ENCODE measurements at regions of chr14 and their contacts with region 1.

Region 1: GRCh38 chr14:102694530-102695166 is 82.6 kb upstream of the TRAF3 start:
- DNase-seq: no peak
- H3K4me3 ChIP-seq: no peak overlapping the region
- CTCF ChIP-seq: peak; percentile 50

Region 2: DNA sequence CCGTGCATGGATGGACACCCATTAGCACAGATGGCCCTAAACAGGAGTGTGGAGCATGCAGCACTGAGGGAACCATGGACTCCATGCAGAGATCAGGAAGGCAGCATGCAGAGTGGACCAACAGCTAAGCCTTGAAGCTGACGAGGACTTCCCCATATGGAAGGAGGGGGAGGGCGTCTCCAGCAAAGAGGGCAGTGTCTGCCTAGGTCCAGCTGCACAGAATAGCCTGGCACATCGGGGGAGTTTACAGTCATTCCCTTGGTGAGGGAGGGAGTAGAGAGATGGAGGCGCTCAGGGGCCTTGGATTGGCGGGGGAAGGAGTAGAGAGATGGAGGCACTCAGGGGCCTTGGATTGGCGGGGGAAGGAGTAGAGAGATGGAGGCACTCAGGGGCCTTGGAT is 249.6 kb before region 1 on chr14:
- CTCF ChIA-PET with region 1: no interaction called
- POLR2A ChIA-PET with region 1: no interaction called
- DNase-seq: no peak
- H3K4me3 ChIP-seq: no peak overlapping the region
- CTCF ChIP-seq: no peak

Region 3: DNA sequence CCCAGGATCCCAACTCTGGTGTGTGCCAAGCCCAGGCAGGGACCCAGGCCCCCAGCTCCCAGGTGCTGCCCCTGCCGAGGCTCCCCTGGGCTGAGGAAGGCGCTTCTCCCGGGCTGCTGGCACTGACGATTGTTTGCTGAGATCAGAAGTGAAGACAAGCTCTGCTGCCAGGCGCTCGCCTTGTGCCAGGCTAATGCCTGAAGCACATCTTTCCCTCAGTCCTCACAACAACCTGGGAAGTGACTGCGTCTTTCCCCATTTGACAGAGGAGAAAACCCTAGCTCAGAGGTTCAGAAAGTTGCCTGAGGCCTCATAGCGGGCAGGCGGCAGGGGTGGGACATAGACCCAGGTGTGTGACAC is 221.9 kb before region 1 on chr14:
- CTCF ChIA-PET with region 1: no interaction called
- POLR2A ChIA-PET with region 1: no interaction called
- DNase-seq: no peak
- H3K4me3 ChIP-seq: no peak overlapping the region
- CTCF ChIP-seq: no peak

Region 4: DNA sequence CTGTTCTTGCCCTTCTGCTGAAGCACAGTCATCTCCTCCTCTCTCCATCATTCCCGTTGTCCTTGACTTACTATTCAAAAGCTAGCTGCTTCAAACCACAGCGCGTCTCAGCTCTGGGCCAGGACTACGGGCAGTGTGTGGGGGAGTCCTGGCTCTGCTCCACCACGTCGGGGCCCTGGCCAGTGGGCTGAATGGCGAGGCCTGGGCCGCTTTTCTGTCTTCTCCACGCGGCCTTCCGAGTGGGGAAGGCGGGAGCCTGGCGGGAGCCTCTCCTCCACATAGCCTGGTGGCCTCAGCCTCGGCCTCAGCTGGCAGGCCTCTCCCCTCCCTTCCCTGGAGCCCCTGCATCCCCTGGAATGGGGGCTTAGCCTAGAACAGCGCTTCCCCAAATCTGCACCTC is 201.6 kb before region 1 on chr14:
- CTCF ChIA-PET with region 1: no interaction called
- POLR2A ChIA-PET with region 1: no interaction called
- DNase-seq: no peak
- H3K4me3 ChIP-seq: no peak overlapping the region
- CTCF ChIP-seq: no peak

Region 5: GRCh38 chr14:102591889-102592763 is 102.5 kb before region 1 on chr14 and contains the start of gene RCOR1:
- CTCF ChIA-PET with region 1: interaction called, 18 read pairs
- POLR2A ChIA-PET with region 1: no interaction called
- DNase-seq: peak; percentile 91
- H3K4me3 ChIP-seq: peak within 1 kb of the TSS; percentile 79
- CTCF ChIP-seq: no peak

Region 6: DNA sequence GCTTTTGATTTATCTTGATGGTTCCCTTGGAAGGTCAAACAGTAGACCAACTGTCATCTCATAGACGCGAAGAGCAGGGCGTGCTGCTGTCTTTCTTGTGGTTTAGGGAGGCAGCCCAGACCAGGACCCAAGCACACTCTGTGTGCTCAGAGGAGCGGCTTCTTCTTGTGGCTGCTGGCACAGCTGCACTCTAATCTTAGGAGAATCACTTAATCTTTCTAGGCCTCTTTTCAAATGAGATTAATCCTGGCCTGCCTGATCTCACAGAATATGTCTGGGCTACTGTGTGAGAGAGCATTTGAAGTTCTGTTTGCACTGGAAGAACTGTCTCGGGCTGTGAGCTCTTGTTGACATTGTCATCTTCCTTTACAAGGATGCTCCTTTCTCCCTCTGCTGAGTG is 22.6 kb after region 1 on chr14:
- CTCF ChIA-PET with region 1: interaction called, 10 read pairs
- POLR2A ChIA-PET with region 1: no interaction called
- DNase-seq: no peak
- H3K4me3 ChIP-seq: no peak overlapping the region
- CTCF ChIP-seq: no peak

Region 7: GRCh38 chr14:102924632-102925588 is 230.3 kb after region 1 on chr14:
- CTCF ChIA-PET with region 1: interaction called, 15 read pairs
- POLR2A ChIA-PET with region 1: no interaction called
- DNase-seq: no peak
- H3K4me3 ChIP-seq: no peak overlapping the region
- CTCF ChIP-seq: no peak

Region 8: DNA sequence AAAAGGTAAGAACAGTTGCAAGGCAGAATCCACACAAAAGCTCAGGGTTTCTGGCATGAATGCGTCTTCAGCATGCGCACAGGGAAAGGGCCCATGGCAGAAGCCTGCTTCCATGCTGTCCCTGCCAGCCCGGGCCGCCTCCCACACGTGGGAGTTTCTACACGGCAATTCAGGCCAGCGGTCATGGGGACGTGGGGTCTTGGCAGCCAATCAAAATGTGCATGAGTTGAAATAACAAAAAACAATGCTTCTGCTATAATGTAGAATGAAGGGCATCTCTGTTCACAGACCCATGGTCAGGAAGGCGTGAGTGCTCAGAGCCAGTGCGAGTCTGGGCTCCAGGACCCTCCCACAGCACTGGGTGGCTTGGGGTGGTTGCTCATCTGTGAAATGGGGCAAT is 256.4 kb after region 1 on chr14:
- CTCF ChIA-PET with region 1: interaction called, 30 read pairs
- POLR2A ChIA-PET with region 1: no interaction called
- DNase-seq: no peak
- H3K4me3 ChIP-seq: no peak overlapping the region
- CTCF ChIP-seq: no peak